Adrenal gland (tissue), 19 donors: ENCODE measurements at regions of chr17 and their contacts with region 1.

Region 1: DNA sequence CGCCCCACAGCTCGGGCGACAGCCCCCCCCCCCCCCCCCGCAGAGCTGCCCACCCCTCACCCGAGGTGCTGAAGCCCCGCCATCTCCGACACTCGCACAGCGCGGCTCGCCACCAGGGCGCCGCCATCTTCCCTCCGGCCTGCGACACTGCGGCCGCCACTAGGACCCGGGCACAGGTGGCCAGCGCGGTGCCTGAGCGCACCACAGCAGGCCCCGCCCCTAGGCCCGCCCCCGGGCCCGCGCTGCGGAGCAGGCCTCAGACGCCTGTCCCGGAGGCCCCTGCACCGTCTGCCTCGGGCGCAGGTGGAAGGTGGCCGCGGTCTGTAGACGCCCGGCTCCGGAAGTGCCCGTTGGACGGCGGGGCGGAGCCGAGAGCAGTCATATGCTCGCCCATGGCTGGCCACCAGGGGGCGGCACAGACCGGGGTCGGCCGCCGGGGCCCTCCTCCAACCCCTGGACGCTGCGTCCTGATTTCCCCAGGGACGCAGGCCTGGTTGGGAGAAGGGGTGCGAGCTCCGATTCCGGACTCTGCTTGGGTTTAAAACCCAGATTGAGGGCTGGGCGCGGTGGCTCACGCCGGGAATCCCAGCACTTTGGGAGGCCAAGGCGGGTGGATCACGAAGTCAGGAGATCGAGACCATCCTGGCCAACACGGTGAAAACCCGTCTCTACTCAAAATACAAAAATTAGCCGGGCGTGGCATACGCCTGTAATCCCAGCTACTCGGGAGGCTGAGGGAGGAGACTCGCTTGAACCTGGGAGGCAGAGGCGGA is at the start of gene MRPL38:
- DNase-seq: peak; percentile 94 to 97 (median 95)
- H3K4me3 ChIP-seq: peak within 1 kb of the TSS in 3 of 4 donors; percentile 48 to 93 (median 88)
- H3K27ac ChIP-seq: peak within 1 kb of the TSS; percentile 72 to 93 (median 83)
- H3K4me1 ChIP-seq: peaks cover 11 to 12% of the 10 kb centered on the region in 2 donors
- H3K27me3 ChIP-seq: no peaks in the 10 kb centered on the region
- CTCF ChIP-seq: peak; percentile 97 to 100 (median 99)
- POLR2A ChIP-seq: peak; percentile 7 to 88
- total RNA-seq, gene MRPL38: 36.7 to 153 (median 64.2) TPM

Region 2: GRCh38 chr17:75764711-75765421 is 140.1 kb before region 1 on chr17 and contains the start of gene GALK1:
- intact Hi-C with region 1: no loop called
- DNase-seq: peak; percentile 67 to 81 (median 75)
- H3K4me3 ChIP-seq: peak within 1 kb of the TSS; percentile 16 to 57 (median 50)
- H3K27ac ChIP-seq: peak within 1 kb of the TSS in 4 of 5 donors; percentile 40 to 91 (median 76)
- H3K4me1 ChIP-seq: peaks cover 2 to 13% of the 10 kb centered on the region in 2 donors
- H3K27me3 ChIP-seq: no peaks in the 10 kb centered on the region
- CTCF ChIP-seq: peak in 5 of 6 experiments; percentile 18 to 58 (median 49)
- POLR2A ChIP-seq: peak; percentile 38 to 55
- total RNA-seq, gene GALK1: 13.9 to 47.3 (median 24.7) TPM

Region 3: GRCh38 chr17:76000016-76000754 is 95.2 kb after region 1 on chr17:
- intact Hi-C with region 1: loop called (anchors 2 to 5 kb)
- DNase-seq: peak in 4 of 7 donors; percentile 33 to 62 (median 52)
- H3K4me3 ChIP-seq: no peak overlapping the region
- H3K27ac ChIP-seq: no peak overlapping the region
- H3K4me1 ChIP-seq: peaks cover 0 to 4% of the 10 kb centered on the region in 2 donors
- H3K27me3 ChIP-seq: no peaks in the 10 kb centered on the region
- CTCF ChIP-seq: peak; percentile 36 to 61 (median 46)
- POLR2A ChIP-seq: no peak

Region 4: GRCh38 chr17:76005263-76006149 is 100.6 kb after region 1 on chr17:
- intact Hi-C with region 1: loop called (anchors 2 to 5 kb)
- DNase-seq: peak; percentile 75 to 90 (median 87)
- H3K4me3 ChIP-seq: no peak overlapping the region
- H3K27ac ChIP-seq: peak overlapping the region in 4 of 5 donors; percentile 29 to 70 (median 56)
- H3K4me1 ChIP-seq: peaks cover 3 to 11% of the 10 kb centered on the region in 2 donors
- H3K27me3 ChIP-seq: no peaks in the 10 kb centered on the region
- CTCF ChIP-seq: peak; percentile 74 to 92 (median 82)
- POLR2A ChIP-seq: no peak